HEK293T (cell line): ENCODE measurements at regions of chr14 and their contacts with region 1.

Region 1: DNA sequence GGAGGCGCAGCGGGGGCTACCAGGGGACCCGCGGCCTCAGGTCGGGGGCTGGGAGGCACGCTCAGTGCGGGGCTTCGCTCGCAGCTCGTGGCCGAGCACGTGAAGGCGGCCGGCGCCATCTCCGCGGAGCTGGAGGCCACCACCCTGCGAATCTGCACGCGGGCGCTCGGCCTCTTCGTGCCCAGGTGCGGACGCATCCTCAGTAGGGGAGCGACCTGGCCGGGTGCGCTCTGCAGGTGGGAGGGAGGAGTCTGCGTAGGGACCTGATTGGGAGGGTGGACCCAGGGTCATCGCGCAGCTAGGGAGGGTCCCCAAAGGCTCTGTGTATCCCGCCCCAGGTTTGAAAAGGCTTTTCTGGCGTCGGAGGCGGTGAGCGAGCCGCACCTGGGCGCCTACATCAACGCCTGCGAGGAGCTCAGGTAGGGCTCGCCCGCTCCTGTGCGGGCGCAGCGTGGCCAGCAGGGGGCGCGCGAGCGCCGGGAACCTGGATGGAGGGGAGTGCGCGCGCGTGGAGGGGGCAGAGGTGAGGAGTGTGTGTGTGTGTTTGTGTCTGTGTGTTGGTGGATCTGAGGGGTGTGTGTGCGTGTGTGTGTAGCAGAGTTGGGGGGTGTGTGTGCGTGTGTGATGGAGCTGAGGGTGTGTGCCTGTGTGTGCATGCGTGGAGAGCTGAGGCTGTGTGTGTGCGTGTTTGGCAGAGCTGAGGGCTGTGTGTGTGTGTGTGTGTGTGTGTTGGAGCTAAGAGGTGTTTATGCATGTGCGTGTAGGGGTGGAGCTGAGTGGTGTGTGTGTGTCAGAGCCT is 10.3 kb downstream of the EXOC3L4 start:
- DNase-seq: peak; percentile 87

Region 2: GRCh38 chr14:103094406-103095209 is 10.2 kb before region 1 on chr14 and contains the start of gene EXOC3L4:
- CTCF ChIA-PET with region 1: interaction called, 14 read pairs
- POLR2A ChIA-PET with region 1: no interaction called
- DNase-seq: no peak

Region 3: GRCh38 chr14:103141119-103141796 is 36.4 kb after region 1 on chr14:
- CTCF ChIA-PET with region 1: interaction called, 15 read pairs
- POLR2A ChIA-PET with region 1: no interaction called
- DNase-seq: peak; percentile 78

Region 4: DNA sequence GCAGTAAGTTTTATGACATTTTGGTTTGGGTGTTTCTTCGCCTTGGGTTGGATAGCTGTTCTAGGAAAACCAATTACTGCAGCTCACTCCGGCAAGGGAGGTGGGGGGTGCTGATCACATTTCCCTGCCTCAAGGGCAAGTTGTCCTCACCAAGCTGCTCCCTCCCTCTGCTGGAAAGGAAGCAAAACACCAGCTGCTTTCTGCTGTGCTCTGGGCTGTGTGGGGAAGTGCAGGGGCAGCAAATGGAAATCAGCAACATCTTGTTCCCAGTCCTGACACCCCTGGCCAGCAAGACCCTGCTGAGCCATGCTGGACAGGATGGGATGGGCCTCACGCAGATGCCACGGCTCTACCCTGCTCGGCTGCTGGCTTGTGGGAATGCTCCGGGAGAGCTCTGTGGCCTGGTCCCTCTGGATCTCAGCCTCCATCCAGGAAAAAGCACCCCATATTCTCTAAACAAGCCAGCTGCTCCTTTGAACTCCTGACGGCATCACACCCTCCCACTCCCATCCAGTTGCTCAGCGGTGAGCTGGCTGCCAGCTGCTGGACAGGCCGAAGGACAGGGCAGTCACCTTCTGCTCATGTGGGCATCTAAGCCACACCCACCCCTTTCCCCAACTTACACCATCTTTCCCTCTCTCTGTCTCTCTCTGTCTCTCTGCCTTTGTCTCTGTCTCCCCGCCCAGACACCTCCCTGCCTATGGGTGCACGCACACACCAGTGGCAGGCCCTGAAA is 176.8 kb after region 1 on chr14:
- CTCF ChIA-PET with region 1: interaction called, 16 read pairs
- POLR2A ChIA-PET with region 1: no interaction called
- DNase-seq: peak; percentile 66